Testis (tissue), 5 donors: ENCODE measurements at regions of chr5 and their contacts with region 1.

Region 1: DNA sequence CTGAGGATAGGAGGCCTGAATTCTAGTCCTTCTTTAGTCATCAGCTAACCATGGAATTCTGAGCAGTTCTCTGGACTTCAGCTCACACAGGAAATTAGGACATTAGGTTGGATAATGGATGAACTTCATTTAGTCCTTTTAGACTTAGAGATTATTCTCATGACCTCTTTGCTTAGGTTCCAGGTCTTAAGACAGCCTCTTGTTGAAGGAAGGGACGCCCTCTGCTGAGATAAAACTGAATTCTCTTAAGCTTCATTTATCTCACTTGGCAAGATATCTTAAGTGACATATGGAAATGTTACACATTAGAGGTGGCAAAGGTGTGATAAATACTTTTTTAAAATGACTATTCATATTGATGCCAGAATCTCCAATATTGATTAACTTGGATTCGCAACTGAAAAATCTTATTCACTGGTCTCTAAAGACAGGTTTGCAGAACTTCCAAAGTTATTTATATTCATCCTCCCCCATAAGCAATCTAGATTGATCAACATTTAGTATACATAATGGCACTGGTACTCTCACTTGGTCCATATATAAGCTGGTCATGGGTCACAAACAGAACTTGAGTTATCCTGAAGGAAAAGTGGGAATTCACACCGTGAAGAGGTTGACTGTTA is 16.9 kb upstream of the ZNF366 start:
- DNase-seq: no peak
- H3K4me3 ChIP-seq: no peak overlapping the region
- H3K27ac ChIP-seq: no peak overlapping the region
- H3K4me1 ChIP-seq: no peaks in the 10 kb centered on the region
- H3K27me3 ChIP-seq: no peaks in the 10 kb centered on the region
- CTCF ChIP-seq: peak in 2 of 3 experiments; percentile 11 to 41
- POLR2A ChIP-seq: no peak

Region 2: DNA sequence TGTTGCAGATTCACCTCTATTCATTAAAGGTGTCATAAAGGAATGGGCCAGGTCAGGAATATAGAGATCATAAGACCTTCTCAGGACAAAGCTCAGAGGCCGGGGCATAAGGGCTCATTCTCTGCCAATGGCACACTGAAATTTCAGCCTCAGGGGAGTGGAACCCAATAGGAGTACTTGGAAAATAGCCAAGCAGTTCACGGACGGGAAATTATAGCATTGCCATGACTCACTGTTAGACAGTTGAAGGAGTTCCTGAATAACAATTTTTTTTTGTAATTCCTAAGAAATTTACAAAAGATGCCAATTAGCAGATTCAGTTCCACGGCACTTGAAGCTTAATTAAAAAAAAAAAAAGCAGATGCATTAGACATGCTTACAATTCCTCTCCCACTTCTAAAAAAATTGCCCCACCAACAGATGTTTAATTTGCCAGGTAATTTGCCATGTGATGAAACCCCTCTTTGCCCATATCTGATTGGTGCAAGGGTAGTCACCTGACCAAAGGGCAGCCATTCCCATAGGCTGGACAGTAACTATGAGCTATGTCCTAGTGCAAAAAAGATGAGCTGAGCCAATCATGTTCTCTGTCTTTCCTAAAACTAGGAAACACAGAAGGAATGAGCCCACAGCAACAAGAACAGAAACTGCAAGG is 145.3 kb before region 1 on chr5:
- intact Hi-C with region 1: loop called (anchors 10 kb)
- DNase-seq: no peak
- H3K4me3 ChIP-seq: no peak overlapping the region
- H3K27ac ChIP-seq: no peak overlapping the region
- H3K4me1 ChIP-seq: no peaks in the 10 kb centered on the region
- H3K27me3 ChIP-seq: no peaks in the 10 kb centered on the region
- CTCF ChIP-seq: no peak
- POLR2A ChIP-seq: no peak